Activated CD8-positive, alpha-beta T cell treated with anti-CD3 and anti-CD28 coated beads, Interleukin-2, amount 10 ng/mL, durations not matched to agents 7 days and 5 days (primary cell): ENCODE measurements at regions of chr5 and their contacts with region 1.

Region 1: GRCh38 chr5:151164686-151165392 is 7.3 kb upstream of the ANXA6 start:
- DNase-seq: peak; percentile 88
- ATAC-seq: peak; percentile 98
- H3K4me3 Mint-ChIP-seq: no peak overlapping the region
- H3K27ac Mint-ChIP-seq: no peak overlapping the region
- H3K4me1 Mint-ChIP-seq: peaks cover 9% of the 10 kb centered on the region
- H3K27me3 Mint-ChIP-seq: peaks cover 4% of the 10 kb centered on the region

Region 2: GRCh38 chr5:151093476-151093889 is 71.4 kb before region 1 on chr5:
- CTCF ChIA-PET with region 1: interaction called, 18 read pairs
- POLR2A ChIA-PET with region 1: interaction called, 3 read pairs
- DNase-seq: no peak
- ATAC-seq: peak; percentile 31
- H3K4me3 Mint-ChIP-seq: peak overlapping the region; percentile 58
- H3K27ac Mint-ChIP-seq: peak overlapping the region; percentile 88
- H3K4me1 Mint-ChIP-seq: peaks cover 70% of the 10 kb centered on the region
- H3K27me3 Mint-ChIP-seq: peaks cover 7% of the 10 kb centered on the region

Region 3: DNA sequence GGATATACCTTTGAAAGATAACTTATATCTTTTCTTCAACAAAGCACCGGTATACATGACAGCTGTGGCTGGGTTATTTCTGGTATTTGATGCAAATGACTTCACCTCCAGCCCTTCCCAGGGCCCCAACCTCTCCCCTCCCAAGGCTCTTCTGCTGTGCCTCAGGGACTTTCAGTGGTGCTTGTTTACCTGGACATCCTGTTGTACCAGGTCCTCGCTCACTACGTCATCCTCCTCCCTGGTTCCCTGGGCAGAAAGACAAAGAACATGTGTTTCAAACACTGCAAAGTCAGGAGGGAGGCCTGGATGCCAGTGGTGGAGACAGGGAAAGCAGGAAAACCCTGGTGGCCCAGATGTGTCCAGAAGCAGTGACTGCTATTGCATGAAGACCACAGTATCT is 30.6 kb before region 1 on chr5:
- CTCF ChIA-PET with region 1: interaction called, 491 read pairs
- POLR2A ChIA-PET with region 1: interaction called, 3 read pairs
- DNase-seq: no peak
- ATAC-seq: no peak
- H3K4me3 Mint-ChIP-seq: no peak overlapping the region
- H3K27ac Mint-ChIP-seq: peak overlapping the region; percentile 53
- H3K4me1 Mint-ChIP-seq: peaks cover 46% of the 10 kb centered on the region
- H3K27me3 Mint-ChIP-seq: no peaks in the 10 kb centered on the region

Region 4: DNA sequence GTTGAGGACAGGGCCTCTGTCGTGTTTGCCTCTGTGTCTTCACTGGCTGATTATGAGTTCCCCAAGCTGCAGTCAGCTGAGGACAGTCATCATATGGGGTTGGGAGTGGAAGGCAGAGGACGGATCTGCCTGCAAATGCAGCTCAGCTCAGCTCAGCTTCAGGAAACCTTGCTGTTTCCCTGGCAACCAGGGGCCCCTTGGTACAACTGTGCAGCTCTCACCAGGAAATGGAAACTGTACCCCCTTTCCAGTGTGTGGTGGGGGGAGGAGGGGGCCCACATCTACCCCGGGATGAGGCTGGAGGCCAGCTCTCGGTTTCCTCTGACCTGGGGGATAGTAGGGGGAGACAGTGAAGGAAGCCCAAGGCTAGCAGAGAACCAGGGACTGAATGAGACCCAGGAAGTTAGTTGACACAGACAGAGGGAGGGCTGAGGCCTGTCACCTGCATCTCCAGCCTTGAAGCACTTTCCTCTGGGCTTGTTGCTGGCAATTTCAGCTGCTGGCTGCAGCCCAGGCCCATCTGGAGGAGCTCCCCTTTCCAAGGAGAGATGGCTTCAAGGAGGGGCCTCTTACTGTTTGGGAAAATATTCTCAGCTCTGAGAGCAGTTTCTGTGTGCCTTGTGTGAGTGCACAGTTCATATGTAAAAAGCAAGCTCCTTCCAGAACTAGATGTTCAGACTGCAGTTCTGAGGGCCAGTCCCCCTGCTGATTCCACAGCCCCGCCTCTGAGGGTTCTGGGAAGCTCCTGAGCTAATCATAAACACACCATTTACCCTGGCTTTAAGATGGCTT is 14.2 kb before region 1 on chr5:
- CTCF ChIA-PET with region 1: interaction called, 90 read pairs
- POLR2A ChIA-PET with region 1: interaction called, 4 read pairs
- DNase-seq: peak; percentile 86
- ATAC-seq: peak; percentile 84
- H3K4me3 Mint-ChIP-seq: peak overlapping the region; percentile 64
- H3K27ac Mint-ChIP-seq: peak overlapping the region; percentile 92
- H3K4me1 Mint-ChIP-seq: peaks cover 93% of the 10 kb centered on the region
- H3K27me3 Mint-ChIP-seq: no peaks in the 10 kb centered on the region

Region 5: DNA sequence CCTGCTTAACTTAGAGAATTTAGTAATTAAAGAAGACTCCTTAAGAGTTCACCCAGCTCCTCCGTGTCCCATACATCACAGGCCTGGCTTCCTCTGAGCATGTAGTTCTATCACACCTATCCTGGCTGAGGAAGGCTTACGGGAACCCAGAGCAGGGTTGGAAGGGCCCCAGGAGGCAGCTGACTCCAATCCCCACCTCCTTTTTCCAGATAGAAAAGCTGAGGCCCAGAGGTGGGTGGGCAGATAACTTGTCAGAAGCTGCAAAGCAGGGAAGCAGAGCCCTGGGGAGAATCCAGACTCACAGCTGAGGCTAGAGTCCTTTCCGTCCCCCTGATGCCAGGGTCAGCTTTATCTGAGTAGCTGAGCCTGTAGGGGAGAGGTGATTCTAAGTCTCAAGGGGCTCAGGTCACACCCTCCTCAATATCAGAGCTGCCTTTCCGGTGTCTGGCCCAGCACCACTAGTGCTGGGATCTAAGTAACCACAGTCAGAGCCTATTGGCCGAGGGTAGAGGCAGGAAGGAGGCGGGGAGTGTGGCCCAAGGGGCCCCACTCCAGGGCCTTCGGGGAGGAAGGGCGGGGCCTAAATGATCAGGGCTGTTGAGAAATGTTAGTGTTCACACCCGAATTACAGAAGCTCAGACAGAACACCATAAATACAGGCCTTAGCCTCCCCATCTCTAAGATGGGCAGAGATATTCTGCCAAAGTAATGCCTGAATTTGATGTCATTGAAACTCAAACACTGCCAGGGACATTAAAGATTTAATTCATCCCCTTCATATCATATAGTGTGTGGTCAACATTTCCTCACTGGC is 49.2 kb after region 1 on chr5:
- CTCF ChIA-PET with region 1: interaction called, 25 read pairs
- POLR2A ChIA-PET with region 1: interaction called, 3 read pairs
- DNase-seq: peak; percentile 95
- ATAC-seq: peak; percentile 88
- H3K4me3 Mint-ChIP-seq: peak overlapping the region; percentile 87
- H3K27ac Mint-ChIP-seq: peak overlapping the region; percentile 97
- H3K4me1 Mint-ChIP-seq: peaks cover 82% of the 10 kb centered on the region
- H3K27me3 Mint-ChIP-seq: no peaks in the 10 kb centered on the region

Region 6: GRCh38 chr5:151239237-151239861 is 74.5 kb after region 1 on chr5:
- CTCF ChIA-PET with region 1: interaction called, 22 read pairs
- POLR2A ChIA-PET with region 1: interaction called, 4 read pairs
- DNase-seq: peak; percentile 72
- ATAC-seq: peak; percentile 70
- H3K4me3 Mint-ChIP-seq: no peak overlapping the region
- H3K27ac Mint-ChIP-seq: no peak overlapping the region
- H3K4me1 Mint-ChIP-seq: peaks cover 46% of the 10 kb centered on the region
- H3K27me3 Mint-ChIP-seq: no peaks in the 10 kb centered on the region

Region 7: DNA sequence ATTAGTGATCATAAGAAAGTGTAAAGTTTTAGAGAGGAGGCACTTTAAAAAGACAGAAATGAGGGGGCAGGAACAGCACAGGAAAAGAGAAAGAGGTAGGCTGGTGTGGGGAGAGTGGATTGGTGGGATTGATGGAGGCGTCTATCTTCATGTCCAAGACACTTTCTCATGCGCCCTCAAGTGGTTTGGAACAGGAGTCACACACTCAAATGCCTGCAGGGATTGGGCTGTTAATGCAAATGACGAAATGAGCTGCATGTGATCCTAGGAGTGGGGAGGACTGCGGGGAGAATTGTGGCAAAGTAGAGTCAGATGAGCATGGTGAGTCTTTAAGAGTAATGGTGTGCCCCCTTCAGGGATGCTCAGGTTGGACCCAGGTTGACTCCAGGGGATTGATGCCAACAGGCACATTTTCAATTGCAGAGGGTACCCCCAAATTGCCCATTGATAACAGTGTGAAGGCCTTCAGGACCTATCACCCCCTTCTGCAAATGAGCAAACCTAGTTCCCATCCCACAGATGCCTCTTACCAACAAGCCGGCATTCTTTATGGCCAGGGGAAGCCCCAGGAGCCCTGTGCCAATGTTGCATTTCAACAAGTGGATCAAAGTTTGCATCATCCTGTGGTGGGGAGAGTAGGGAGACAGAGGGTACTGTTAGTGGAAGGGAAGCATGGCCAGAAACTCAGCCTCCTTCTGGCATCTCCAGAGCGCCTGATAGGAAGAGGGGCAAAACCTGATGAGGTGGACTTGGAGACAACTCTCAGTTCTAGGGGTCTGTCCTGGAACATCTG is 133.4 kb after region 1 on chr5:
- CTCF ChIA-PET with region 1: no interaction called
- POLR2A ChIA-PET with region 1: no interaction called
- DNase-seq: no peak
- ATAC-seq: no peak
- H3K4me3 Mint-ChIP-seq: no peak overlapping the region
- H3K27ac Mint-ChIP-seq: no peak overlapping the region
- H3K4me1 Mint-ChIP-seq: no peaks in the 10 kb centered on the region
- H3K27me3 Mint-ChIP-seq: peaks cover 21% of the 10 kb centered on the region